PC-9 (cell line): ENCODE measurements at regions of chr3 and their contacts with region 1.

Region 1: DNA sequence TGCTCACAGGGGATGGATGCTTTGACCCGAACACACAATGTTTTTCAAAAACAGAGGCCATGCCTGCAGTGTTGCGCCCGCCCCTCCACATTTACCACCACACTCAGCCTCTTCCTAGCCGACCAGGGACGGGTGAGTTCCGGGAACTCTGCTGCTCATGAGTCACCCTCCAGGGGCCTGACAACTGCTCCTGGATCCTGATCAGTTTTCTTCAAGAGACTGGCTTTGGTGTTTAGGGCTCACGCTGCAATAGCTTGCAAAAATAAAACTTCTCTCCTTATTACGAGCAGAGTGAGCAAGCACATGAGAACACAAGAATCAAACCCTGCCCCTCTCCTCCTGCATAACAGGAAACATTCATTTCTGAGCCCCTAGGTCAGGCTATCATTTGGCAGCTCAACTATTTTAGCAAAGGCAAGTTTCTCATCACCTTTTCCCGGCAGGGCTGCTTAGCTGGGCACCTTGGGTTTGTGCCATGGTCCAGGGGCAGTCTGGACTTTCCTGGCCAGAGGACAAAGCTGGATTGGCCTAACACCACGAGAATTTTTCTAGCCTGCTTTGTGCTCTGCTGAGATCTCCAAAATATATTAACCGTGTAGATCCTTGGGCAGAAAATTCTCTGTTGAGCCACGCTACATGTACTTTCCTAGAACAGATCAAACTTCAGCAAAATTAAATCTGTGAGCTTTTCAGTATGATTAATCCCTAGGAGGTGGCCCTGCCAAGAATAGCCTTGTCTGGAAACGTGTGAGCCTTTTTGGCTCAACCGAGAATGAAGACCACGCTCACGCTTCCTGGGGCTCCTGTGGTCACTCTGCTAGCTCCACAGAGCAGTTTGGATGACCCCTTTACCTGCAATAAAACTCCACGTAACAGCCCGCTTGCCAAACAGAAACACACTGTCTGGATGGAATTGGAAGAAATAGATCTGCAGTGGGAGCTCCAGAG is 52.7 kb upstream of the SPATA12 start:
- DNase-seq: peak; percentile 65 to 80
- H3K4me3 ChIP-seq: peak overlapping the region; percentile 51; the same call in 1 of the 2 replicates
- H3K27ac ChIP-seq: peak overlapping the region; percentile 98
- H3K4me1 ChIP-seq: peaks cover 39% of the 10 kb centered on the region
- H3K27me3 ChIP-seq: no peaks in the 10 kb centered on the region
- CTCF ChIP-seq: no peak

Region 2: GRCh38 chr3:56939834-56940233 is 68.0 kb before region 1 on chr3:
- CTCF ChIA-PET with region 1: no interaction called
- POLR2A ChIA-PET with region 1: no interaction called
- intact Hi-C with region 1: no loop called
- DNase-seq: no peak
- H3K4me3 ChIP-seq: no peak overlapping the region
- H3K27ac ChIP-seq: no peak overlapping the region
- H3K4me1 ChIP-seq: no peaks in the 10 kb centered on the region
- H3K27me3 ChIP-seq: no peaks in the 10 kb centered on the region
- CTCF ChIP-seq: no peak

Region 3: DNA sequence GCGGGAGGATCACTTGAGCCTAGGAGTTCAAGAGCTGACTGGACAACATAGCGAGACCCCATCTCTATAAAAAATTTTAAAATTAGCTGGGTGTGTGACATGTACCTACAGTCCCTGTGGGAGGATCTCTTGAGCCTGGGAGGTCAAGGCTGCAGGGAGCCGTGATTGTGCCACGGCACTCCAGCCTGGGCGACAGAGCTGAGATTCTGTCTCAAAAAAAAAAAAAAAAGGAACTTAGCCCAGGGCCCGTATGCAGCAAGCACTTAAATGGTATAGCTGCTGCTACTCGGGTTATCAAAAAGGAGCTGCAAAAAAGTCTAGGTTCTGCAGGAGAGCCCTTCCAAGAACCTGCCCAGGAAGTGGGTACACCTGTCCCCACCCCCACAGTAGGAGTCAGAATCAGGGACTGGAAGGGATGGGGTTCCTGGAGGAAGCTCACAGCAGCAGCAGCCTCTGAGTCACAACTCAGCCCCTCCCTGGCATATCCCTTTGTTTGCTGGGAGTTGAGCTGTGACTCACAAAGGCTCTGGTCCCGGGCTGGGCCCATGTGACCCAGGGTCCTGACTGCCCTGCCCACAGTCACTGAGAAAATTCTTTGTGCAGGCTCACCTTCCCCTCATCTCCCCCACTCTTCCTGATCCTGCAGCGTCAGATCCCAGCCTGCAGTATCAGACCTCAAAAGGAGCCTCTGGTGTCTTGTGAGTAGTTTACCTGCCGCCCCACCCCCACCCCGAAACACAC is 52.5 kb after region 1 on chr3 and contains the start of gene SPATA12:
- CTCF ChIA-PET with region 1: no interaction called
- POLR2A ChIA-PET with region 1: interaction called, 7 read pairs
- intact Hi-C with region 1: loop called (anchors 2 kb)
- DNase-seq: peak; percentile 94 to 97
- H3K4me3 ChIP-seq: peak within 1 kb of the TSS; percentile 12; the same call in 1 of the 2 replicates
- H3K27ac ChIP-seq: peak within 1 kb of the TSS; percentile 96
- H3K4me1 ChIP-seq: peaks cover 45% of the 10 kb centered on the region
- H3K27me3 ChIP-seq: no peaks in the 10 kb centered on the region
- CTCF ChIP-seq: no peak
- total RNA-seq, gene SPATA12: 0.43 and 0.57 TPM in 2 replicates

Region 4: DNA sequence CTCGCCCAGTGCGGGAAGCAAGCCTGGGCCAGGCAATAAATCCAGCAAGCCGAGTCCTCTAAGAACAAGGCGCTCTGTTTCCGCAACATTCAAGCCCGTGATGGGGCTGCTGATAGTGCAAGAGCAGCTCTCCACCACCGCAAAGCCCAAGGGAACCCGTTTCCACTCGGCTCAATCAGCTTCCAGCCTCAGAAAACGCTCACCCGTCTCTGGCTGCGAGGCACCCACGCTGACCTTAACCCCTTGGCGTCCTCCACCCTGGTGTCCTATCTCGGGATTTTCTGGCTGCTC is 70.5 kb after region 1 on chr3:
- CTCF ChIA-PET with region 1: interaction called, 3 read pairs
- POLR2A ChIA-PET with region 1: interaction called, 5 read pairs
- intact Hi-C with region 1: loop called (anchors 1 kb)
- DNase-seq: no peak
- H3K4me3 ChIP-seq: peak overlapping the region; percentile 95
- H3K27ac ChIP-seq: peak overlapping the region; percentile 89
- H3K4me1 ChIP-seq: peaks cover 30% of the 10 kb centered on the region
- H3K27me3 ChIP-seq: no peaks in the 10 kb centered on the region
- CTCF ChIP-seq: no peak

Region 5: DNA sequence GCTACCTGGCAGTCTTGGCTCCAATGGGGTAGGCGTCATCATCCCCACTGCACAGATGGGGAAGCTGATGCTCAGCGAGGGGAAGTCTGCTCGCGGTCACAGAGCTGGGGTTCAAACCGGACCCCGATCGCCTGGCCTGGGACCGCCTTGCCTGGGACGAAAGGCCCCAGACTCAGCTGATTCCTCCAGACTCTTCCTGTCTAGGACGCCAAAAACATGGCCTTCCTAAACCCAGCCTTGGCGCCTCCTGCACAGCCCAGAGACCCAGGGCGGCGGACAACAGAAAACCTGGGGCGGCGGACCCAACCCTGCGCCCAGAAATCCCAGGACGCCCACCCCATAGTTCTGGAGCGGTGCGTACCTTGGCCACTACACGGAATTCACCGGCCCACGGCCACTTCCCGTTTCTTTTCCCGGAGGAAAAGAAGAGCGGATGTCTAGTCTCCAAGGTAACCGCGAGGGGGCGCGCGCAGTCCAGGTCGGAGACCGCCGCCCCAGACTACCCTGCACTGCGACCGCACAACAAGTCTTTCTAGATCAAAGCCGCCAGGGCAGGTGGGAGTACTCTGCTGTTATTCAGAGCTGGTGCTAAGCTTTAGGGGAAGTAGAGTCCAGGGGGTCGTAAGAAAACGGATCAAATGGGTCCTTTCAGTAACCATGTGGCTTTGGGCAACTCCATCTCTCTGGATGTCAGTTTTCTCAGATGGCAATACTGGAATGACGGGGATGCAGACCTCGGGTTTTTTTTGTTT is 162.3 kb after region 1 on chr3:
- CTCF ChIA-PET with region 1: no interaction called
- POLR2A ChIA-PET with region 1: interaction called, 3 read pairs
- intact Hi-C with region 1: loop called (anchors 1 kb)
- DNase-seq: peak; percentile 60 to 75
- H3K4me3 ChIP-seq: peak overlapping the region; percentile 54
- H3K27ac ChIP-seq: no peak overlapping the region
- H3K4me1 ChIP-seq: peaks cover 3% of the 10 kb centered on the region; the same call in 1 of the 2 replicates
- H3K27me3 ChIP-seq: no peaks in the 10 kb centered on the region
- CTCF ChIP-seq: peak; percentile 81

Region 6: DNA sequence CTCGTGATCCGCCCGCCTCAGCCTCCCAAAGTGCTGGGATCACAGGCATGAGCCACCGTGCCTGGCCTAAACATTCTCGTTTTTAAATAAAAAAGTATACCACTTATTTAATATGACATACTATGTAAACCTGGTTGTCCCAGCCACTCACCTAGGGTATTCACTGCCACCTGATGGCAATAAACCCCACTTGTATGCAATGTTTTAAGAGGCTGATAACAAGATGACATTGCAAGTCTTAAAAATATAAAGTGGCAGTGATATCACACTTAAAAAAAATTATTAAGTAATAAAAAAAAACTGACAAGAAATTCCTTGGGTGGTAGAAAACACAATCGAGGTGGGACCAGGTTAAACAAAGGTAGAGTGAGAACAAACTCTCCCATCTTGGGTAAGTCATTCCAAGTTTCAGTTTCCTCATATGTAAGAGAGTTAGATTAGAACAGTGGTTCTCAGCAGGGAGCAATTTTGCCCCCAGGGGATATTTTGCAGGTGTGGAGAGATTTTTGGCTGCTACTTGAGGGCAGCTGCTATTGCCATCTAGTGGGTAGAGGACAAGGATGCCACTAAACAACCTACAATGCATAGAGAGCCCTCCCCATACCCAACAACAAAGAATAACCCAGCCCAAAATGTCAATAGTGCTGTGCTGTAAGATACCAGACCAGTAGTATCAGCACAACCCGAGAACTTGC is 574.8 kb after region 1 on chr3:
- CTCF ChIA-PET with region 1: no interaction called
- POLR2A ChIA-PET with region 1: no interaction called
- intact Hi-C with region 1: loop called (anchors 5 kb)
- DNase-seq: peak; percentile 88 to 96
- H3K4me3 ChIP-seq: no peak overlapping the region
- H3K27ac ChIP-seq: peak overlapping the region; percentile 91
- H3K4me1 ChIP-seq: peaks cover 24% of the 10 kb centered on the region
- H3K27me3 ChIP-seq: no peaks in the 10 kb centered on the region
- CTCF ChIP-seq: peak; percentile 62; the same call in 1 of the 2 replicates